B cell (primary cell): ENCODE measurements at regions of chr6 and their contacts with region 1.

Region 1: GRCh38 chr6:85678602-85679444 is 36.1 kb upstream of the SYNCRIP start:
- DNase-seq: peak; percentile 100
- ATAC-seq: peak; percentile 90
- H3K4me3 ChIP-seq: peak overlapping the region; percentile 74 to 98 (median 91)
- H3K4me3 Mint-ChIP-seq: peak overlapping the region; percentile 92
- H3K27ac ChIP-seq: peak overlapping the region; percentile 86 to 89
- H3K27ac Mint-ChIP-seq: peak overlapping the region; percentile 95
- H3K4me1 ChIP-seq: peaks cover 25 to 36% of the 10 kb centered on the region in 2 donors
- H3K4me1 Mint-ChIP-seq: peaks cover 46% of the 10 kb centered on the region
- H3K27me3 ChIP-seq: no peaks in the 10 kb centered on the region
- H3K27me3 Mint-ChIP-seq: no peaks in the 10 kb centered on the region
- CTCF ChIP-seq: no peak

Region 2: DNA sequence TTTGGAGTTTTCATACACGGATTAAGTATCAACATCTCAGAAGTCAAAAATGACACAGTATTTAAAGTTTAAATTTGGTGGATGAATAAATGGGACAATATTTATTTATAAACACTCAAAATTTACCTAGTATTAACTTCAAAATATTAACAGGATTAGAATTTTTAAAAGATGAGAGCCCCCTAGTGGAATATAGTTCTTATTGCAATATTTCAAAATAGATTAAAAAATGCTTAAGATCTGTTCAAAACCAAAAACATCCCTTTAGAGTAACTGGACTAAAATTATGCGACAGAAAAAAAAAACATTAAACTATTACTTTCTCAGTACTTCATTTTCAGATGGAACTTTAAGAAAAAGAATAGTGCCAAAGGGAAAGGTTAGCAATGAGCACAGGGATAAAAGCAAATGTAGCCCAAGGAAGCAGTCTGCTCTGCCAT is 141.7 kb before region 1 on chr6:
- CTCF ChIA-PET with region 1: interaction called, 8 read pairs
- POLR2A ChIA-PET with region 1: no interaction called
- intact Hi-C with region 1: loop called (anchors 5 kb)
- DNase-seq: peak; percentile 14
- ATAC-seq: no peak
- H3K4me3 ChIP-seq: no peak overlapping the region
- H3K4me3 Mint-ChIP-seq: no peak overlapping the region
- H3K27ac ChIP-seq: no peak overlapping the region
- H3K27ac Mint-ChIP-seq: no peak overlapping the region
- H3K4me1 ChIP-seq: no peaks in the 10 kb centered on the region
- H3K4me1 Mint-ChIP-seq: no peaks in the 10 kb centered on the region
- H3K27me3 ChIP-seq: no peaks in the 10 kb centered on the region
- H3K27me3 Mint-ChIP-seq: no peaks in the 10 kb centered on the region
- CTCF ChIP-seq: peak; percentile 92

Region 3: DNA sequence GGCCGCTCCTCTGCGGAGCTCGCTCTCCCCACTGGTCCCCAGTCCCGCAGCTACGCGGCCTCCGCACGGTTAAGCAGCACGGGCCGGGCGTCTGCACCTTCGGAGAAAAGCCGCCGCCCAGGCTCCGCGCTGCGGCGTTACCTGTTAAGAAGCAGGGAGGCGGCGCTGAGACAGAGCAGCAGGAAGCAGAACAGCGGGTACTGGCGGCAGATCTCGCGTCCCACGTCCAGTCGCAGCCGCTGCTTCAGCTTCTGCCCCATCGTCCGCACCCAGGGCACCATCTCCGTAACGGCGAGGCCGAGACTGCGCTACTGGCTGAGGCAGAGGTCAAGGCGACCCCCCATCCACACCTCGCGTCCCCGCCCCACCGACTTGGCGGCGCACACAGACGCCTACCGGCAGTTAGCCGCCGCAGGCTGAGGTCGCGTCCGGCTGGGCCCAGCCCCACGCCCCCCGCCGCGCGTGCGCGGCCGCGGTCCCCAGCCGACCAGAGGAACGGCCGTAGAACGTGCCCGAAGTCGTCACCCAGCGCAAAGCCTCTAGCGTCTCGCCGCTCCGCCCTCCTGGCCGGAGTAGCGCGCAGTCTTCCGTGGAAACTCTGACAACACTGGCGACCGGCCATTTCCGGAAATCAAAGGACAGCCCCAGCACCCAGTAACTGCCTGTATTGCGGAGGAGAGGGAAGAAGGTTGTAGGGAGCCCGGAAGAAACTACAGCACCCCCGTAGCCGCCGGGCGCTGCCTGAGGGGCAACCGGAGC is 85.2 kb before region 1 on chr6 and contains the start of gene SNX14:
- CTCF ChIA-PET with region 1: interaction called, 7 read pairs
- POLR2A ChIA-PET with region 1: interaction called, 31 read pairs
- intact Hi-C with region 1: loop called (anchors 1 kb)
- DNase-seq: peak; percentile 90
- ATAC-seq: peak; percentile 83
- H3K4me3 ChIP-seq: peak within 1 kb of the TSS; percentile 67 to 89 (median 79)
- H3K4me3 Mint-ChIP-seq: peak within 1 kb of the TSS; percentile 100
- H3K27ac ChIP-seq: peak within 1 kb of the TSS; percentile 59 to 73
- H3K27ac Mint-ChIP-seq: peak within 1 kb of the TSS; percentile 99
- H3K4me1 ChIP-seq: peaks cover 13 to 19% of the 10 kb centered on the region in 2 donors
- H3K4me1 Mint-ChIP-seq: peaks cover 39% of the 10 kb centered on the region
- H3K27me3 ChIP-seq: no peaks in the 10 kb centered on the region
- H3K27me3 Mint-ChIP-seq: no peaks in the 10 kb centered on the region
- CTCF ChIP-seq: no peak
- total RNA-seq, gene SNX14: 80.0 and 95.1 TPM in 2 replicates

Region 4: GRCh38 chr6:85620308-85620707 is 58.5 kb before region 1 on chr6:
- CTCF ChIA-PET with region 1: no interaction called
- POLR2A ChIA-PET with region 1: no interaction called
- intact Hi-C with region 1: loop called (anchors 10 kb)
- DNase-seq: no peak
- ATAC-seq: no peak
- H3K4me3 ChIP-seq: no peak overlapping the region
- H3K4me3 Mint-ChIP-seq: no peak overlapping the region
- H3K27ac ChIP-seq: no peak overlapping the region
- H3K27ac Mint-ChIP-seq: no peak overlapping the region
- H3K4me1 ChIP-seq: no peaks in the 10 kb centered on the region
- H3K4me1 Mint-ChIP-seq: peaks cover 4% of the 10 kb centered on the region
- H3K27me3 ChIP-seq: no peaks in the 10 kb centered on the region
- H3K27me3 Mint-ChIP-seq: no peaks in the 10 kb centered on the region
- CTCF ChIP-seq: no peak

Region 5: GRCh38 chr6:85642774-85643536 is 35.9 kb before region 1 on chr6 and contains the start of gene SYNCRIP:
- CTCF ChIA-PET with region 1: interaction called, 43 read pairs
- POLR2A ChIA-PET with region 1: interaction called, 193 read pairs
- intact Hi-C with region 1: loop called (anchors 1 kb)
- DNase-seq: peak; percentile 98
- ATAC-seq: peak; percentile 80
- H3K4me3 ChIP-seq: peak within 1 kb of the TSS; percentile 79 to 100 (median 82)
- H3K4me3 Mint-ChIP-seq: peak within 1 kb of the TSS; percentile 92
- H3K27ac ChIP-seq: peak within 1 kb of the TSS; percentile 97 to 98
- H3K27ac Mint-ChIP-seq: peak within 1 kb of the TSS; percentile 99
- H3K4me1 ChIP-seq: peaks cover 20 to 27% of the 10 kb centered on the region in 2 donors
- H3K4me1 Mint-ChIP-seq: peaks cover 43% of the 10 kb centered on the region
- H3K27me3 ChIP-seq: no peaks in the 10 kb centered on the region
- H3K27me3 Mint-ChIP-seq: no peaks in the 10 kb centered on the region
- CTCF ChIP-seq: no peak
- total RNA-seq, gene SYNCRIP: 88.5 and 98.3 TPM in 2 replicates